ENCODE measurements at regions of chr2 and their contacts with region 1.

Region 1: DNA sequence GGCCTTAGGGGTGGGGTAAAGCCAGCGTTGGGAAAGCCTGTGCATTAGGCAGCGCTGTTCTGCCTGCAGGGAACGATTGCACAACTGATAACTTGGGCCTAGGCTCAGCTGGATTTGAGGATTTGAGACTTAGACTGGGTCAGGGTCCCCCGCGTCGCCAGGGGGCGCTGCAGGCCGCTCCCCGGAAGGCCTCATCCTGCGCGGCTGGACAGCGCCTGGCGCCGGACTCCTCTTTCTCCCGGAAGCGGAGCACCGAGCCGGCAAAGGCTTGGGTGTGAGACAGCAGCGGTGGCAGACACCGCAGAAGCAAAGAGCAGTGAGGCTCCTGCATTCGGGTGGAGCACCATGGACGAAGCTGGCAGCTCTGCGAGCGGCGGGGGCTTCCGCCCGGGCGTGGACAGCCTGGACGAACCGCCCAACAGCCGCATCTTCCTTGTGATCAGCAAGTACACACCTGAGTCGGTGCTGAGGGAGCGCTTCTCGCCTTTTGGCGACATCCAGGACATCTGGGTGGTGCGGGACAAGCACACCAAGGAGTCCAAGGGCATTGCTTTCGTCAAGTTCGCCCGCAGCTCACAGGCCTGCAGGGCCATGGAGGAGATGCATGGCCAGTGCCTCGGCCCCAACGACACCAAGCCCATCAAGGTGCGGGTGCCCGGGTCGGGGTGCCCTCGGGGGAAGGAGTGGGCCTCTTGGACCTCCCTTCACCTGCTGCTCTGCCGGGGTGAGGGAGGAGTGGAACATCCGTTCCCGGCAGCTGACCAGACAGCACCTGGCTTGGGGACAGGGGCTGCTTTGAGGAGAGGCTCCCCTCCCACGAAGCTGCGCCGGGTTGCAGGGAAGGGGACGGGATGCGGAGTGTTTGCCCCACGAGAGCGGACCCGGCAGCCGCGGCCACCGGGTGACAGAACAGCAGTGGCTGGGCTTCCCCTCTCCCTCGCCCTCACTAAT is at the start of gene RBM45:
- DNase-seq: peak; percentile 89
- H3K4me3 Mint-ChIP-seq: peak within 1 kb of the TSS; percentile 85
- H3K27ac Mint-ChIP-seq: peak within 1 kb of the TSS; percentile 89
- H3K4me1 Mint-ChIP-seq: peaks cover 34% of the 10 kb centered on the region
- H3K27me3 Mint-ChIP-seq: no peaks in the 10 kb centered on the region

Region 2: GRCh38 chr2:178125125-178125524 is 12.6 kb after region 1 on chr2:
- CTCF ChIA-PET with region 1: interaction called, 15 read pairs
- DNase-seq: no peak
- H3K4me3 Mint-ChIP-seq: no peak overlapping the region
- H3K27ac Mint-ChIP-seq: no peak overlapping the region
- H3K4me1 Mint-ChIP-seq: no peaks in the 10 kb centered on the region
- H3K27me3 Mint-ChIP-seq: no peaks in the 10 kb centered on the region